Caco-2 (cell line): ENCODE measurements at regions of chr16 and their contacts with region 1.

Region 1: DNA sequence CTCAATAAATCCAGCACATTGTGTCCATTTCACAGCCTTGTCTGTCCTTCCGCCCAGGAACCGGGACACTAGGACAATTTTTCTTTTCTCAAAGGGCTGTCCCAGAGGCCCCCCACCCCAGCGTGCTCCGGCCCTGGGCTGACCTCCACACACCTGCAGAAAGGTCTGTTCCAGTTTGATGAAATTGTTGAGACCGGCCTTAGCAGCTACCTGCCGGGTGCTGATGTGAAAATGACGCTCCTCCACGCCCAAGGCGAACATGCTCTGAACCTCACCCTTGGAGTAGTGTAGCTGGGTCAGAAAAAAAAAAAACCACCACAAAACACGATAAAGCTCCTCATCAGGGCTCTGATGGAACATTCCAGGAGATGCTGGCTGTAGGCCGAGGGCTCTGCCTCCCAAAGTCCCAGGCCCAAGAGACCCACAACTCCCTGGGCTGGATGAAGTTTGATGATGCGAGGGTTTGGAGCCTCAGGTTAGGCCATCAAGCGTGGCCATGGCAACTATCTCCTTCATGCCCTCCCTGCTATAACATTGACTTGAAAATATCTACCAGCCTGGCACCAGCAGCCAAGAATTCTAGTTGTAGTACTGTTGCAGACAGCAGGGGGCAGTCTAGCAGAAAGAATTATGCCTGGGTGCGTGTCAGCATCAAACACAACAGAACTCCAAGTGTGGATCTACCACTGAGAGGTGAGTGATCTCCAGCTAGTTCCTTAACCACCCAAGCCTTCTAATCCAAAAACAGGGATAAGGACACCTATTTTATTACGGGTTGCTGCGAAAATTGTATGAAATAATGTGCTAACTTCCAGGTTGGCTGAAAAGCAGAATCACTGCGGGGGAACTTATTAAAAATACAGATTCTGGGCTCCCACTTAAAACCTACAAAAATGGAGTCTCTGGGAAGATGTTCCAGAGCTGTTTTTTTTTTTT is 62.1 kb downstream of the RMI2 start:
- DNase-seq: peak; percentile 52 to 77
- H3K4me3 ChIP-seq: no peak overlapping the region
- H3K4me3 Mint-ChIP-seq: no peak overlapping the region
- H3K27ac Mint-ChIP-seq: no peak overlapping the region
- H3K4me1 ChIP-seq: no peaks in the 10 kb centered on the region
- H3K4me1 Mint-ChIP-seq: no peaks in the 10 kb centered on the region
- H3K27me3 ChIP-seq: no peaks in the 10 kb centered on the region
- H3K27me3 Mint-ChIP-seq: no peaks in the 10 kb centered on the region
- CTCF ChIP-seq: peak; percentile 68 to 73

Region 2: GRCh38 chr16:10971560-10971961 is 435.8 kb before region 1 on chr16:
- CTCF ChIA-PET with region 1: no interaction called
- POLR2A ChIA-PET with region 1: no interaction called
- intact Hi-C with region 1: loop called (anchors 1 kb)
- DNase-seq: peak; percentile 53 to 56
- H3K4me3 ChIP-seq: no peak overlapping the region
- H3K4me3 Mint-ChIP-seq: no peak overlapping the region
- H3K27ac Mint-ChIP-seq: no peak overlapping the region
- H3K4me1 ChIP-seq: 0 out of 2 replicates have a peak, but pooled peaks cover 3% of the 10 kb centered on the region
- H3K4me1 Mint-ChIP-seq: no peaks in the 10 kb centered on the region
- H3K27me3 ChIP-seq: no peaks in the 10 kb centered on the region
- H3K27me3 Mint-ChIP-seq: no peaks in the 10 kb centered on the region
- CTCF ChIP-seq: peak; percentile 52 to 67

Region 3: DNA sequence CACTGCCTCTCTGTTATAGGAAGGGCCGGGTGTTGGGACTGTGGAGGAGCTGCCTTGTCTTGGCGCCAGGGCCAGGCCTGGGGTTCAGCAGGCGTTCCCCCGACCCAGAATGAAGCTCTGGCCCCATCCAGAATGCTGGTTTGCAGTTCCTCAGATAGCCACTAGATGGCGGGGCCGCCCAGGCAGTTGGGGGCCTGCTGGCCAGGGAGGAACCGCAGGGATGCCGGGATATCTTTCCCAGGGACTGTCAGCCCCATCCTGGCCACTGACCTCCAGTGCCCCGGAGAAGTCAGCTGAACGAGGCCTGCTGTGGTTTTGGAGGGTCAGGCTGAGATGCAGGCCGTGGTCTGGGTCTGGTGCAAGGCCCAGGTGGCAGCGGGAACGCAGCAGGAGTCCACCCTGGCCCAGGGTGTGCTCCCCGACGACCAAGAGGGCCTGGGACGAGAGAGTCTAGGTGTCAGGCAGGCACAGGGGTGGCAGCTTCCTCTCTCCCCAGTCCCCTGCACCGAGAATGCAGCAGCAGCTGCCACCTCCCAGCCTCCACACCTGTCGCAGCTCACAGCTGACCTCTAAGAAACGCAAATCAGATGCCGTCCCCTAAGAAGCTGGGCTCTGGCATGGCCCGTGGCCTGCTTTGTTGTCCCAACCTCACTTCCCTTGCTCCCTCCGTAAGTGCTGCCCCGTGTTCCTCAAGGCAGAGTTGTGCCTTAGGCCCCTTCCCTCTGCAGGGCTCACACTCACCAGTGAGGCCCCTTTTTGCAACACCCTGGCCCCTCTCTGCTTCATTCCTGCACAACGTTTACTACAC is 10.9 kb before region 1 on chr16:
- CTCF ChIA-PET with region 1: interaction called, 15 read pairs
- POLR2A ChIA-PET with region 1: no interaction called
- intact Hi-C with region 1: loop called (anchors 1 kb)
- DNase-seq: peak; percentile 68 to 83
- H3K4me3 ChIP-seq: no peak overlapping the region
- H3K4me3 Mint-ChIP-seq: no peak overlapping the region
- H3K27ac Mint-ChIP-seq: no peak overlapping the region
- H3K4me1 ChIP-seq: no peaks in the 10 kb centered on the region
- H3K4me1 Mint-ChIP-seq: no peaks in the 10 kb centered on the region
- H3K27me3 ChIP-seq: no peaks in the 10 kb centered on the region
- H3K27me3 Mint-ChIP-seq: no peaks in the 10 kb centered on the region
- CTCF ChIP-seq: peak; percentile 96 to 97

Region 4: DNA sequence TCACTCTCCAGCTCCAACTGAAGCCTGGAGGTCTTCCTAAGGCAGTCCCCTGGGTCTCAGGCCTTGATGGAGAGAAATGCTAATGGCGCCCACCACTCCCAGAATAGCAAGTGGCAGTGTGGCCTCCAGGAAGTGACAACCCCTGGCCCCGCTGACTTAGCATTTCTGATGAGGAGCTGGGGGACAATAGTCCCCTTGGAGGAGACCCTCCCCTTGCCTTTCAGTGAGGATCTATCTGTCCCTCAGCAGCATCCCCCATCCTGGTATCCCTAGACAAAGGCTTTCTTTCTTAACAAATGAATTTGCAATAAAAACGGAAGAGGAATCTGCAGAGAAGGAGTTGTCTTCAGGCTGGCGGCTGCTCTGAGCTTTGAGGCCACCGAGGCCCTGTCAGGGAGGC is 110.6 kb after region 1 on chr16:
- CTCF ChIA-PET with region 1: no interaction called
- POLR2A ChIA-PET with region 1: no interaction called
- intact Hi-C with region 1: no loop called
- DNase-seq: no peak
- H3K4me3 ChIP-seq: no peak overlapping the region
- H3K4me3 Mint-ChIP-seq: no peak overlapping the region
- H3K27ac Mint-ChIP-seq: no peak overlapping the region
- H3K4me1 ChIP-seq: no peaks in the 10 kb centered on the region
- H3K4me1 Mint-ChIP-seq: no peaks in the 10 kb centered on the region
- H3K27me3 ChIP-seq: no peaks in the 10 kb centered on the region
- H3K27me3 Mint-ChIP-seq: peaks cover 3% of the 10 kb centered on the region
- CTCF ChIP-seq: no peak

Region 5: DNA sequence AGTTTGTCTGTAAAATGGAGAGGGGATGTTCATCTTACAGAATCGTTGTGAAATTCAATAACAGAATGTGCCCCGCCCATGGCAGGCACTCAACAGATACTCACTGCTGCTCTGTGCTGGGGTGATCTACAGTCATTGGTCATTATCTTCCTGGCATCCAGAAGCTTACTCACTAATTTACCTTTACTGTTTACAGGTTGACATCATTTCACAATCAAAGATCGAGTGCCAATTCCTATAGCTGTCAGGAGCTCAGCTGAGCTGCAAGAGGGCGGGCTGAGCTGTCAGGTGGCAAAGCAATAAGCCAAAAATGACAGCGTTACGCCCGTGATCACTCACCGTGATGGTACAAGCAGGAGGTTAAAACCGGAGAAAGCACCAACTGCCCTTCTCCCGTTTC is 128.2 kb after region 1 on chr16:
- CTCF ChIA-PET with region 1: interaction called, 7 read pairs
- POLR2A ChIA-PET with region 1: no interaction called
- intact Hi-C with region 1: loop called (anchors 2 kb)
- DNase-seq: no peak
- H3K4me3 ChIP-seq: no peak overlapping the region
- H3K4me3 Mint-ChIP-seq: no peak overlapping the region
- H3K27ac Mint-ChIP-seq: no peak overlapping the region
- H3K4me1 ChIP-seq: no peaks in the 10 kb centered on the region
- H3K4me1 Mint-ChIP-seq: no peaks in the 10 kb centered on the region
- H3K27me3 ChIP-seq: no peaks in the 10 kb centered on the region
- H3K27me3 Mint-ChIP-seq: no peaks in the 10 kb centered on the region
- CTCF ChIP-seq: no peak

Region 6: GRCh38 chr16:11715246-11715947 is 308.1 kb after region 1 on chr16:
- CTCF ChIA-PET with region 1: no interaction called
- POLR2A ChIA-PET with region 1: no interaction called
- intact Hi-C with region 1: loop called (anchors 2 kb)
- DNase-seq: no peak
- H3K4me3 ChIP-seq: no peak overlapping the region
- H3K4me3 Mint-ChIP-seq: no peak overlapping the region
- H3K27ac Mint-ChIP-seq: no peak overlapping the region
- H3K4me1 ChIP-seq: no peaks in the 10 kb centered on the region
- H3K4me1 Mint-ChIP-seq: peaks cover 6% of the 10 kb centered on the region
- H3K27me3 ChIP-seq: no peaks in the 10 kb centered on the region
- H3K27me3 Mint-ChIP-seq: no peaks in the 10 kb centered on the region
- CTCF ChIP-seq: no peak

Region 7: GRCh38 chr16:11819798-11820197 is 412.5 kb after region 1 on chr16:
- CTCF ChIA-PET with region 1: no interaction called
- POLR2A ChIA-PET with region 1: no interaction called
- intact Hi-C with region 1: loop called (anchors 10 kb)
- DNase-seq: no peak
- H3K4me3 ChIP-seq: no peak overlapping the region
- H3K4me3 Mint-ChIP-seq: no peak overlapping the region
- H3K27ac Mint-ChIP-seq: no peak overlapping the region
- H3K4me1 ChIP-seq: no peaks in the 10 kb centered on the region
- H3K4me1 Mint-ChIP-seq: no peaks in the 10 kb centered on the region
- H3K27me3 ChIP-seq: no peaks in the 10 kb centered on the region
- H3K27me3 Mint-ChIP-seq: no peaks in the 10 kb centered on the region
- CTCF ChIP-seq: no peak